CD8-positive, alpha-beta T cell (primary cell): ENCODE measurements at regions of chr4 and their contacts with region 1.

Region 1: GRCh38 chr4:147866532-147867271 is 134.8 kb downstream of the ARHGAP10 start:
- DNase-seq: peak; percentile 85 to 97 (median 92)
- ATAC-seq: peak; percentile 99
- H3K4me3 ChIP-seq: no peak overlapping the region
- H3K4me3 Mint-ChIP-seq: no peak overlapping the region
- H3K27ac ChIP-seq: no peak overlapping the region
- H3K27ac Mint-ChIP-seq: no peak overlapping the region
- H3K4me1 ChIP-seq: no peaks in the 10 kb centered on the region
- H3K4me1 Mint-ChIP-seq: no peaks in the 10 kb centered on the region
- H3K27me3 ChIP-seq: no peaks in the 10 kb centered on the region
- H3K27me3 Mint-ChIP-seq: no peaks in the 10 kb centered on the region
- CTCF ChIP-seq: peak; percentile 99

Region 2: DNA sequence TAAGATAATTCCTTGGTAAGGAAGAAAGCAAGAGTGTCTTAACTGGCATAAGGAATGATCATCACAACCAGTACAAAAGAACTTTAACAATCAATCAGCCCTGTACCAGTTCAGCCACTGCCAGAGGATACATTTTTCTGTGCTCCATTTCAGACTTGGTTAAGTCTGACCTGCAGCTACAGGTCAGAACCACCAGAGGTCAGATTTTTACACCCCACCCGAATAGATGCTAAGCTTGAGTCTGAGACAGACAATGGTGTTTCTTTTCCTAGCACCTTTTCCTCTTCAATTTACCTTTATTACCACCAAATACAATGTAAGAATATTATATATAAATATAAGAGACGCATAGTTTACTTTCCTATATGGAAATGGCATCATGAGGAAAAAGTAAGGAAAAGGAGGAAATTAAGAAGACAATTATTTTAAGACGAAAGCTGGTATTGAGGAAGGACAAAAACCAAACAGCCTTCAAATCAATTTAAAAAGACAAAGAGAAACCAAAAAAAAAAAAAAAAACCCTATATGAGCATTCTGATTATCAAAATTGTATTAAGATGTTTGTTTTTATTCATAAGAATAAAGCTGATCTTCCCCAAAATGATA is 705.7 kb before region 1 on chr4:
- CTCF ChIA-PET with region 1: no interaction called
- POLR2A ChIA-PET with region 1: no interaction called
- intact Hi-C with region 1: loop called in 1 of 2 experiments (anchors 2 kb)
- DNase-seq: peak in 2 of 9 experiments; percentile 15 to 25
- ATAC-seq: no peak
- H3K4me3 ChIP-seq: no peak overlapping the region
- H3K4me3 Mint-ChIP-seq: no peak overlapping the region
- H3K27ac ChIP-seq: no peak overlapping the region
- H3K27ac Mint-ChIP-seq: no peak overlapping the region
- H3K4me1 ChIP-seq: no peaks in the 10 kb centered on the region
- H3K4me1 Mint-ChIP-seq: peaks cover 7% of the 10 kb centered on the region
- H3K27me3 ChIP-seq: peaks cover 0 to 9% of the 10 kb centered on the region in 2 experiments
- H3K27me3 Mint-ChIP-seq: peaks cover 23% of the 10 kb centered on the region
- CTCF ChIP-seq: peak; percentile 49

Region 3: GRCh38 chr4:147617173-147617840 is 249.4 kb before region 1 on chr4 and contains the start of gene TMEM184C:
- CTCF ChIA-PET with region 1: interaction called, 16 read pairs
- POLR2A ChIA-PET with region 1: no interaction called
- intact Hi-C with region 1: loop called (anchors 2 to 5 kb)
- DNase-seq: peak; percentile 98 to 99 (median 99)
- ATAC-seq: peak; percentile 96
- H3K4me3 ChIP-seq: peak within 1 kb of the TSS; percentile 62 to 74
- H3K4me3 Mint-ChIP-seq: peak within 1 kb of the TSS; percentile 91
- H3K27ac ChIP-seq: peak within 1 kb of the TSS; percentile 81
- H3K27ac Mint-ChIP-seq: peak within 1 kb of the TSS; percentile 95
- H3K4me1 ChIP-seq: peaks cover 40% of the 10 kb centered on the region
- H3K4me1 Mint-ChIP-seq: peaks cover 46% of the 10 kb centered on the region
- H3K27me3 ChIP-seq: no peaks in the 10 kb centered on the region
- H3K27me3 Mint-ChIP-seq: no peaks in the 10 kb centered on the region
- CTCF ChIP-seq: no peak
- total RNA-seq, gene TMEM184C: 10.9 to 11.7 TPM

Region 4: GRCh38 chr4:147714575-147715401 is 151.9 kb before region 1 on chr4:
- CTCF ChIA-PET with region 1: interaction called, 137 read pairs
- POLR2A ChIA-PET with region 1: interaction called, 6 read pairs
- intact Hi-C with region 1: no loop called
- DNase-seq: no peak
- ATAC-seq: no peak
- H3K4me3 ChIP-seq: no peak overlapping the region
- H3K4me3 Mint-ChIP-seq: no peak overlapping the region
- H3K27ac ChIP-seq: no peak overlapping the region
- H3K27ac Mint-ChIP-seq: no peak overlapping the region
- H3K4me1 ChIP-seq: no peaks in the 10 kb centered on the region
- H3K4me1 Mint-ChIP-seq: no peaks in the 10 kb centered on the region
- H3K27me3 ChIP-seq: no peaks in the 10 kb centered on the region
- H3K27me3 Mint-ChIP-seq: peaks cover 6% of the 10 kb centered on the region
- CTCF ChIP-seq: no peak

Region 5: DNA sequence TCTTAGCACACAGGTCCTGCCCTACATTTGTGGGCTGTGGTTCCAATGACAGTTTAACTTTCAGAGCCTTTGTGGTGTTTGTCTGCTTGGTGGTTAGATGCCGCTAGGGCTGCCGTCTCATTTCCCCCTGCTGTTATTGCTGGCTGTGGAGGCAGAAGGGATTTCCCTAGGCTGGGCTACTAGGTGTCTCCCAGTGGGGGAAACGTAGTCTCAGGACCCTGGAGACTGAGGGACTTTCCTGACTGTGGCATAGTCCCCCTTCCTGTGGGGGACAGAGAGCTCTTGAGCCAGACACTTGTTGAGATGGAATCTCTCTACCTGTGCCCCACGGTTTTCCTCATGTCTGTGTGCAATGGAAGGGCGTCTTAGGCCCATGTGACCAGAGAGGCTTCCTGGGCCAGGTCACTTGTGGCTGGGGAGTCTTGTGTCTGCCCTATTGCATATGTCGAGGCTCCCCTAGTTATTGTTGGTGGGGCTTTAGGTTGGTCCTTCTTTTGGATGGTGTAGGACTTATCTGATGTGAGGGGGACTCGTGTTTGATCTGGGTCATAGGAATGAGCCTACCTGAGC is 66.6 kb before region 1 on chr4:
- CTCF ChIA-PET with region 1: interaction called, 14 read pairs
- POLR2A ChIA-PET with region 1: interaction called, 4 read pairs
- intact Hi-C with region 1: loop called in 1 of 2 experiments (anchors 2 kb)
- DNase-seq: peak; percentile 30 to 93 (median 59)
- ATAC-seq: peak; percentile 91
- H3K4me3 ChIP-seq: no peak overlapping the region
- H3K4me3 Mint-ChIP-seq: peak overlapping the region; percentile 36
- H3K27ac ChIP-seq: no peak overlapping the region
- H3K27ac Mint-ChIP-seq: peak overlapping the region; percentile 47
- H3K4me1 ChIP-seq: peaks cover 15% of the 10 kb centered on the region
- H3K4me1 Mint-ChIP-seq: peaks cover 24% of the 10 kb centered on the region
- H3K27me3 ChIP-seq: no peaks in the 10 kb centered on the region
- H3K27me3 Mint-ChIP-seq: no peaks in the 10 kb centered on the region
- CTCF ChIP-seq: no peak

Region 6: GRCh38 chr4:147843162-147843561 is 23.5 kb before region 1 on chr4:
- CTCF ChIA-PET with region 1: interaction called, 45 read pairs
- POLR2A ChIA-PET with region 1: no interaction called
- intact Hi-C with region 1: no loop called
- DNase-seq: peak in 2 of 9 experiments; percentile 24 to 42
- ATAC-seq: peak; percentile 51
- H3K4me3 ChIP-seq: no peak overlapping the region
- H3K4me3 Mint-ChIP-seq: no peak overlapping the region
- H3K27ac ChIP-seq: no peak overlapping the region
- H3K27ac Mint-ChIP-seq: no peak overlapping the region
- H3K4me1 ChIP-seq: no peaks in the 10 kb centered on the region
- H3K4me1 Mint-ChIP-seq: no peaks in the 10 kb centered on the region
- H3K27me3 ChIP-seq: no peaks in the 10 kb centered on the region
- H3K27me3 Mint-ChIP-seq: no peaks in the 10 kb centered on the region
- CTCF ChIP-seq: no peak

Region 7: GRCh38 chr4:148025981-148026380 is 159.3 kb after region 1 on chr4:
- CTCF ChIA-PET with region 1: no interaction called
- POLR2A ChIA-PET with region 1: no interaction called
- intact Hi-C with region 1: no loop called
- DNase-seq: no peak
- ATAC-seq: no peak
- H3K4me3 ChIP-seq: no peak overlapping the region
- H3K4me3 Mint-ChIP-seq: no peak overlapping the region
- H3K27ac ChIP-seq: no peak overlapping the region
- H3K27ac Mint-ChIP-seq: no peak overlapping the region
- H3K4me1 ChIP-seq: no peaks in the 10 kb centered on the region
- H3K4me1 Mint-ChIP-seq: peaks cover 2% of the 10 kb centered on the region
- H3K27me3 ChIP-seq: no peaks in the 10 kb centered on the region
- H3K27me3 Mint-ChIP-seq: no peaks in the 10 kb centered on the region
- CTCF ChIP-seq: no peak

Region 8: DNA sequence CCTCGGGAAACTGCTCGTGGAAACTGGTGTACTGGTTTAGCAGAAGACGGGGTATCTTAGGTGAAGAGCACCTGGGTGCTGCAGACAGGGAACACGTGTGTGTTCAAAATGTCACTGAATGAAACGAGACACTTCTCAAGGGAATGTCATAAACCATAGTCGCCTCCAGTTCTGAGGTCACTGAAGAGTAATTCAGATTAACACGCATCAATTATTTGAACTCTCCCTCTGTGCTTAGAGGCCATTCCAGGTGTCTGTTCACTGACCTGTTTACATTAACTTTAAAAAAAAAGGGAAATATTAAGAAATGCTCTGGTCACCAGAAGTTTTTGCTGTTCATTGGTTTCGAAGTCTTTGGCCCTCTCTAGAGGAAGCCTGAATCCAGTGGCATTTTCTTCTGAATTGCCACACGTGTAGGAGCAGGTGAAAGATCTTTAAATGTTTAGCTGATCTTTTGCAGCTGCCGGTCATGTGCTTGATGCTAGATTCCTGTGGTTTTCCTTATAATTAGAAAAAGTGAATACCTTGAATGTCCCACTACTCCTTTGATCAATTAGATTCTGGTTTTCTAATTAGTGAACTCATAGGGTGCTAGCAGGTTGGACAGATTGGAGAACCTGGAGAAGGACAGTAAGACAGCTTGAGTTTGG is 195.7 kb after region 1 on chr4:
- CTCF ChIA-PET with region 1: no interaction called
- POLR2A ChIA-PET with region 1: no interaction called
- intact Hi-C with region 1: no loop called
- DNase-seq: no peak
- ATAC-seq: no peak
- H3K4me3 ChIP-seq: no peak overlapping the region
- H3K4me3 Mint-ChIP-seq: no peak overlapping the region
- H3K27ac ChIP-seq: no peak overlapping the region
- H3K27ac Mint-ChIP-seq: peak overlapping the region; percentile 98
- H3K4me1 ChIP-seq: peaks cover 44% of the 10 kb centered on the region
- H3K4me1 Mint-ChIP-seq: peaks cover 68% of the 10 kb centered on the region
- H3K27me3 ChIP-seq: no peaks in the 10 kb centered on the region
- H3K27me3 Mint-ChIP-seq: no peaks in the 10 kb centered on the region
- CTCF ChIP-seq: no peak